Activated naive CD4-positive, alpha-beta T cell treated with anti-CD3 and anti-CD28 coated beads, Interleukin-2, amount 10 ng/mL, durations not matched to agents 7 days and 5 days (primary cell): ENCODE measurements at regions of chr10 and their contacts with region 1.

Region 1: GRCh38 chr10:98028168-98028770 is 2.2 kb downstream of the CRTAC1 start:
- DNase-seq: peak; percentile 78
- H3K4me3 Mint-ChIP-seq: no peak overlapping the region
- H3K27ac Mint-ChIP-seq: no peak overlapping the region
- H3K4me1 Mint-ChIP-seq: peaks cover 8% of the 10 kb centered on the region
- H3K27me3 Mint-ChIP-seq: peaks cover 87% of the 10 kb centered on the region

Region 2: DNA sequence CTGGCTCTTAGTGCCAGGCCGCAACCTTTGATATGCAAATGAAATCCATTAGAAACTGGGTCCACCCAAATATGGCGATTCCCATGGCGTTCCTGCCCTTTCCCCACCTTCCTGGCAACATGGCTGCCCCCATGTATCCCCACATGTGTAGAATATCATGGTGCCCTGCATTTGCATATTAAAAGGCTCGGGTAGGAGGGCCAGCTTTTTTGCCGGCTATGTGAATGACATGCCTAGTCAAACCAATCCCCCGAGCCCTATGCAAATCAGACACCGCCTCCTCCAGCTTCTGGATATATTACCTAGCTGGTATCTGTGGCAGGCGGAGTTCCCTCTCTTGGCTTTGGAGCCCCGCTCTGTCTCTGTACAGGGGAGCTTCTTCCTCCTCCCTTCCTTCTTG is 548.3 kb before region 1 on chr10:
- CTCF ChIA-PET with region 1: no interaction called
- DNase-seq: no peak
- H3K4me3 Mint-ChIP-seq: no peak overlapping the region
- H3K27ac Mint-ChIP-seq: no peak overlapping the region
- H3K4me1 Mint-ChIP-seq: no peaks in the 10 kb centered on the region
- H3K27me3 Mint-ChIP-seq: no peaks in the 10 kb centered on the region

Region 3: DNA sequence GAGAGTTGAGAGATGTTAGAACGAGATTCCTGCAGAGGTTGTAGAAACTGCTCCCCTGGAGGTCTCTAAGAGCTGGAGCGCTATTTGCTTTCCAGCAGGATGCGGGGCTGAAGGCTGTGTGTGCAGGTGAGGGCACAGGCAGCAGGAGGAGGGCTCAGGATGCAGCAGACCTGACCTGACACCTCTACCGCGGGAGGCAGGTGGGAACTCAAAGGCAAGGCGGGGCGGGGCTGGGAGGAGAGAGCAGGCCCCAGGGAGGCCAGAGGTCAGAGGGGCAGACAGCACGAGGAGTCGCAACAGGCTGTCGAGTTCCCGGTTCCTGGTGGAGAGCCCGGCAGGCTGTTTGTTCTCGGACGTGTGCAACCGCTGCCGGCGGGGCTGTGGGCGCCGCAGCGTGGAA is 10.0 kb after region 1 on chr10:
- CTCF ChIA-PET with region 1: interaction called, 49 read pairs
- DNase-seq: no peak
- H3K4me3 Mint-ChIP-seq: no peak overlapping the region
- H3K27ac Mint-ChIP-seq: no peak overlapping the region
- H3K4me1 Mint-ChIP-seq: no peaks in the 10 kb centered on the region
- H3K27me3 Mint-ChIP-seq: peaks cover 87% of the 10 kb centered on the region

Region 4: GRCh38 chr10:98045785-98046389 is 17.6 kb after region 1 on chr10:
- CTCF ChIA-PET with region 1: interaction called, 49 read pairs
- DNase-seq: peak; percentile 71
- H3K4me3 Mint-ChIP-seq: no peak overlapping the region
- H3K27ac Mint-ChIP-seq: no peak overlapping the region
- H3K4me1 Mint-ChIP-seq: no peaks in the 10 kb centered on the region
- H3K27me3 Mint-ChIP-seq: peaks cover 41% of the 10 kb centered on the region

Region 5: DNA sequence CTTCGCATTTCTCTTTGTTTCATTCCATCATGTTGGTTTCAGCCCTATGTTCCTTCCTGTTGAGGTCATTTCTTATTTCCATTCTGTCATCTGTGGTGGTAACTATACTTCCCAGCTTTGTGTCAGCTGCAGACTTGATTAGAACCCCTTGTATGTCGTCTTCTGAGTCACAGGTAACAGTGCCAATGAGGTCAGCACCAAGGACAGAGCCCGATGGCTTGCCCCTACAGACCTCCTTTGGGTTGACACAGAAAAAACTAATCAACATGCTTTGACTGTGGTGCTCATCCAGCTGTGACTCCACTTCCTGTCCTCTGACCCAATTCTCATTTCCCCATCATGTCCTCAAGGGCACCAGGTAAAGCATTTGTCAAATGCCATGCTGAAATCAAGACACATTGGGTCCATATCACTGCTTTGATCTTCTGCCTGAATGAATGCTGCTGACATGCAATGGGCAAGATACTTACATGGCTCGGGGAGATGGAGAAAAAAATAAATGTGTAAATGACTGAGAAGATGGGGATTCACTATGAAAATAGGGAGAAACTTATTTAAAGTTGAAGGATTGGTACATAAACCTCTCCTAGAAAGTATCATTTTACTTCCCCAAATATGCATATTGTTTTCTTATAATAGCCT is 27.7 kb after region 1 on chr10:
- CTCF ChIA-PET with region 1: no interaction called
- DNase-seq: peak; percentile 54
- H3K4me3 Mint-ChIP-seq: no peak overlapping the region
- H3K27ac Mint-ChIP-seq: no peak overlapping the region
- H3K4me1 Mint-ChIP-seq: no peaks in the 10 kb centered on the region
- H3K27me3 Mint-ChIP-seq: peaks cover 23% of the 10 kb centered on the region